ENCODE measurements at regions of chr18 and their contacts with region 1.

Region 1: GRCh38 chr18:67417864-67418523 is 98.5 kb downstream of the DSEL start:
- DNase-seq: peak; percentile 19
- H3K4me3 Mint-ChIP-seq: no peak overlapping the region
- H3K27ac Mint-ChIP-seq: peak overlapping the region; percentile 9
- H3K4me1 Mint-ChIP-seq: peaks cover 9% of the 10 kb centered on the region
- H3K27me3 Mint-ChIP-seq: no peaks in the 10 kb centered on the region

Region 2: GRCh38 chr18:67239826-67240225 is 178.2 kb before region 1 on chr18:
- CTCF ChIA-PET with region 1: no interaction called
- intact Hi-C with region 1: loop called (anchors 5 kb)
- DNase-seq: peak; percentile 21
- H3K4me3 Mint-ChIP-seq: no peak overlapping the region
- H3K27ac Mint-ChIP-seq: no peak overlapping the region
- H3K4me1 Mint-ChIP-seq: peaks cover 38% of the 10 kb centered on the region
- H3K27me3 Mint-ChIP-seq: no peaks in the 10 kb centered on the region

Region 3: GRCh38 chr18:67402543-67402942 is 15.5 kb before region 1 on chr18:
- CTCF ChIA-PET with region 1: no interaction called
- intact Hi-C with region 1: no loop called
- DNase-seq: no peak
- H3K4me3 Mint-ChIP-seq: no peak overlapping the region
- H3K27ac Mint-ChIP-seq: no peak overlapping the region
- H3K4me1 Mint-ChIP-seq: peaks cover 6% of the 10 kb centered on the region
- H3K27me3 Mint-ChIP-seq: peaks cover 15% of the 10 kb centered on the region

Measured in activated naive CD4-positive, alpha-beta T cell treated with anti-CD3 and anti-CD28 coated beads for 36 hours (primary cell).